Naive thymus-derived CD4-positive, alpha-beta T cell (primary cell): ENCODE measurements at regions of chr10 and their contacts with region 1.

Region 1: GRCh38 chr10:14837757-14838581 is at the starts of genes CDNF, HSPA14 and MSANTD7:
- DNase-seq: peak; percentile 98 to 99 (median 99)
- ATAC-seq: peak; percentile 98
- H3K4me3 ChIP-seq: peak within 1 kb of the TSS; percentile 88
- H3K4me3 Mint-ChIP-seq: peak within 1 kb of the TSS; percentile 87 to 98 (median 97)
- H3K27ac ChIP-seq: peak within 1 kb of the TSS; percentile 94
- H3K27ac Mint-ChIP-seq: peak within 1 kb of the TSS; percentile 92 to 99 (median 97)
- H3K4me1 ChIP-seq: peaks cover 15 to 17% of the 10 kb centered on the region in 2 donors
- H3K4me1 Mint-ChIP-seq: peaks cover 14 to 45% (median 32%) of the 10 kb centered on the region in 7 donors
- H3K27me3 ChIP-seq: no peaks in the 10 kb centered on the region
- H3K27me3 Mint-ChIP-seq: no peaks in the 10 kb centered on the region
- total RNA-seq, gene CDNF: 1.0 to 8.4 (median 4.9) TPM
- total RNA-seq, gene HSPA14: 14.1 to 23.8 (median 17.6) TPM
- total RNA-seq, gene MSANTD7: 16.2 to 31.4 (median 21.9) TPM

Region 2: DNA sequence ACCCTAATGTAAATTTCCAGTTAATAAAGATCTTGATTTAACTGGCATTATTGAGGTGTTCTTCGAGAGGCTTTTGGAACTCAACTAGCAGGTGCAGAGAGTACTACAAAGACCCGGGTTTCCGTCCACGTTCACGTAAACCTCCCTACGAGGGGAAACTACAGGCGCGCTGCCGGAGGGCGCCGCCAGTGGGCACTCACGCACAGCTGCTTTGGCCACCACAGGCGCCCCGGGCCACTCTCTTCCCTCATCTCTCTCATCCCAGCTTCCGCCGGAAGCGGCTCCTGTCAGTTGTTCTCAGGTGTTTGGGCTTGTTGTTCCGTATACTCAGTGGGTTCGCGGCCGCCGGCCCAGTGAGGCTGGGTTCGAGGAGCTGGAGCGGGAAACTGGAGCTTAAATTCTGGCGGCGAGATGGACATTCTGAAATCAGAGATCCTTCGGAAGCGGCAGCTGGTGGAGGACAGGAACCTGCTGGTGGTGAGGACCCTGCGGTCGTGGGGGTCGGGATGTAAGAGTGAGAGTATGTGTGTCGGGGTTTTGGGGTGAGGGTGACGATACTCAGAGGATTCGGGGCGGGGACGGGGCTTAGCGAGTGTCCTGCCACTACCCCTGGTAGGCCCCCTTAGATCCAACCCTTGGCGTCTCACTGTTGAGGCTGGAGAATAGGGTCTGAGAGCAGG is 1251.2 kb before region 1 on chr10 and contains the start of gene PRPF18:
- CTCF ChIA-PET with region 1: no interaction called
- POLR2A ChIA-PET with region 1: no interaction called
- intact Hi-C with region 1: loop called (anchors 1 to 2 kb)
- DNase-seq: peak; percentile 87 to 96 (median 93)
- ATAC-seq: peak; percentile 100
- H3K4me3 ChIP-seq: peak within 1 kb of the TSS; percentile 96
- H3K4me3 Mint-ChIP-seq: peak within 1 kb of the TSS; percentile 95 to 100 (median 100)
- H3K27ac ChIP-seq: peak within 1 kb of the TSS; percentile 74
- H3K27ac Mint-ChIP-seq: peak within 1 kb of the TSS; percentile 91 to 100 (median 98)
- H3K4me1 ChIP-seq: peaks cover 8 to 13% of the 10 kb centered on the region in 2 donors
- H3K4me1 Mint-ChIP-seq: peaks cover 15 to 49% (median 40%) of the 10 kb centered on the region in 7 donors
- H3K27me3 ChIP-seq: no peaks in the 10 kb centered on the region
- H3K27me3 Mint-ChIP-seq: peaks cover 9 to 27% (median 16%) of the 10 kb centered on the region in 5 donors
- total RNA-seq, gene PRPF18: 20.2 to 30.0 (median 27.0) TPM

Region 3: GRCh38 chr10:14536241-14537213 is 301.4 kb before region 1 on chr10:
- CTCF ChIA-PET with region 1: no interaction called
- POLR2A ChIA-PET with region 1: no interaction called
- intact Hi-C with region 1: loop called (anchors 5 kb)
- DNase-seq: peak in 3 of 9 donors; percentile 29 to 47 (median 31)
- ATAC-seq: peak; percentile 72
- H3K4me3 ChIP-seq: no peak overlapping the region
- H3K4me3 Mint-ChIP-seq: no peak overlapping the region
- H3K27ac ChIP-seq: no peak overlapping the region
- H3K27ac Mint-ChIP-seq: peak overlapping the region in 6 of 9 donors; percentile 31 to 83 (median 72)
- H3K4me1 ChIP-seq: peaks cover 4 to 31% of the 10 kb centered on the region in 2 donors
- H3K4me1 Mint-ChIP-seq: peaks cover 55 to 97% (median 90%) of the 10 kb centered on the region in 7 donors
- H3K27me3 ChIP-seq: no peaks in the 10 kb centered on the region
- H3K27me3 Mint-ChIP-seq: no peaks in the 10 kb centered on the region

Region 4: GRCh38 chr10:14571866-14572507 is 266.0 kb before region 1 on chr10:
- CTCF ChIA-PET with region 1: no interaction called
- POLR2A ChIA-PET with region 1: interaction called, 14 read pairs
- intact Hi-C with region 1: loop called in 1 of 2 experiments (anchors 1 kb)
- DNase-seq: peak in 8 of 9 donors; percentile 47 to 94 (median 90)
- ATAC-seq: peak; percentile 80
- H3K4me3 ChIP-seq: peak overlapping the region; percentile 67
- H3K4me3 Mint-ChIP-seq: peak overlapping the region; percentile 86 to 98 (median 96)
- H3K27ac ChIP-seq: peak overlapping the region; percentile 87
- H3K27ac Mint-ChIP-seq: peak overlapping the region; percentile 93 to 100 (median 99)
- H3K4me1 ChIP-seq: peaks cover 40 to 53% of the 10 kb centered on the region in 2 donors
- H3K4me1 Mint-ChIP-seq: peaks cover 42 to 88% (median 79%) of the 10 kb centered on the region in 7 donors
- H3K27me3 ChIP-seq: no peaks in the 10 kb centered on the region
- H3K27me3 Mint-ChIP-seq: no peaks in the 10 kb centered on the region

Region 5: DNA sequence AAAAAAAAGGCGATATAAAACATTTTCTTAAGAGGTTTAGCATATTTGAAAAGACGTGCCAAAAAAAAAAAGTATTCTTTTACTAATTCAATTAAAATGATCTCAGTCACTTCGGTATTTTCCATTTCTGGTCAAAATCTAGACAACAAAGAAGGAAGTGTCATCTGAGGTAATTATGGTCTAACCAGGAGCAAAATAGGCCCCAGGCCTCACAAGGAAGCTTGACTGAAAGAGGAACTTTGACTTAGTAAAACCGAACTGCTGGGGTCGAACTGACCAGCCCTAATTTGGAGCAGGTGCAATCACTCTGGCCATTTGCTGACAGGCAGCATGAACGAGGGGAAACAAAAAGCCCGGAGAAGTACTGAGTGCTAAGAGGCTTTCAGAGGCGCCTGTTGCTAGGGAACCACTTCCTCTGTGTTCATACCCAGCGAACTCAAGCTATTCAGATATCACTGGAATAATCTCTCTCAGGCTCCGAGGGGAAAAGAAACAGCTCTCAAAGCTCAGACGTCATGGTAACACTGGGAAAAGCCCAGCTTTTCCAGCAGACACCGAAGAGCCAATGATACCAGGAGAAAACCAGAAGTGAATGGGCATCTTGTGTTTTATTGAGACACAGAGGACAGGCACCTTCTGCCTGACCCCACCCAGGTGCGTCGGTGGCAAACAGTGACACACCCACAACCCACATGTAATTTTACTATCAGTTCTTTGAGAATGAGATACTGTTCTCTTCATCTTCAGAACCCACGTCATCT is 189.8 kb before region 1 on chr10:
- CTCF ChIA-PET with region 1: no interaction called
- POLR2A ChIA-PET with region 1: interaction called, 8 read pairs
- intact Hi-C with region 1: loop called (anchors 1 to 2 kb)
- DNase-seq: peak; percentile 55 to 93 (median 86)
- ATAC-seq: peak; percentile 91
- H3K4me3 ChIP-seq: peak overlapping the region; percentile 54
- H3K4me3 Mint-ChIP-seq: peak overlapping the region; percentile 77 to 98 (median 88)
- H3K27ac ChIP-seq: peak overlapping the region; percentile 98
- H3K27ac Mint-ChIP-seq: peak overlapping the region; percentile 95 to 100 (median 99)
- H3K4me1 ChIP-seq: peaks cover 25 to 31% of the 10 kb centered on the region in 2 donors
- H3K4me1 Mint-ChIP-seq: peaks cover 20 to 70% (median 61%) of the 10 kb centered on the region in 7 donors
- H3K27me3 ChIP-seq: no peaks in the 10 kb centered on the region
- H3K27me3 Mint-ChIP-seq: no peaks in the 10 kb centered on the region

Region 6: DNA sequence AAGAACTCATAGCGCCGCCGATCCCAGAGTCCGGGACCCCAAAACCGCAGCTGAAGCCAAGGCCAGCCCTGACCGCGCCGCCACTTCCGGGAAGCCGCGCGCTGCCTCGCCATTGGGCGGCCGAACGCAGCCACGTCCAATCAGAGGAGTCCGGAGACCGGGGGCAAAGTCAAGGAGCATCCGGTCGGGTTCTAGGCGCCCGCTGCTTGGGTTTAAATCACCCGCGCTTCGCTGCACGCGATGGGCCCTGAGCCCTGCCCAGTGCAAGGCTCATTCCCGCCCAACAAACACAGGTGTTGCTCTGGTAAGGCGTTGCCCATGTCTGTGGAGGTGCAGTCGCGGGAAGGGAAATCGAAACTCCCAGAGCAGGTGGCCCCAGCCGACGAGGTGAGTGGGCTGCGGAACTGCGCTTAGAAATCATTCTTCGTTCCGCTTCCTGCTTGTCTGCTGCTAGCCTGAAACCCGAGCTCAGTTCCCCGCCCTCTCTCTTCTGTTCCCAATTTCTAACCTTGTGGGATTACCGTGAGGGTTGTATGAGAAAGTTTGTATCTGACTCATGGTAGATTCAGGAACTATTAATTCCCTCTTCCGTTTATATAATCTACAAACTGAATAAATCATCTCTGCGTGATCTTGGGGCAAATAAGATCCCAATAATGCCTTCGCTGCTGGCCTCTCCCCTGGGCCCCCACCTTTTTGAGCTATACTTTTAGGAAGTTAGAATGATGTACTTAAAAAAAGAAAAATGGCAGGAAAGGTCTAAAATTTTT is 116.2 kb after region 1 on chr10 and contains the start of gene DCLRE1C:
- CTCF ChIA-PET with region 1: no interaction called
- POLR2A ChIA-PET with region 1: interaction called, 6 read pairs
- intact Hi-C with region 1: loop called (anchors 1 kb)
- DNase-seq: peak; percentile 70 to 89 (median 87)
- ATAC-seq: peak; percentile 90
- H3K4me3 ChIP-seq: peak within 1 kb of the TSS; percentile 97
- H3K4me3 Mint-ChIP-seq: peak within 1 kb of the TSS; percentile 89 to 96 (median 92)
- H3K27ac ChIP-seq: peak within 1 kb of the TSS; percentile 78
- H3K27ac Mint-ChIP-seq: peak within 1 kb of the TSS; percentile 91 to 97 (median 96)
- H3K4me1 ChIP-seq: peaks cover 29 to 32% of the 10 kb centered on the region in 2 donors
- H3K4me1 Mint-ChIP-seq: peaks cover 29 to 69% (median 65%) of the 10 kb centered on the region in 7 donors
- H3K27me3 ChIP-seq: no peaks in the 10 kb centered on the region
- H3K27me3 Mint-ChIP-seq: no peaks in the 10 kb centered on the region
- total RNA-seq, gene DCLRE1C: 16.4 to 38.7 (median 24.2) TPM